ENCODE measurements at regions of chr5 and their contacts with region 1.

Region 1: GRCh38 chr5:157994906-157995519 is 136.1 kb upstream of the CLINT1 start:
- DNase-seq: peak; percentile 65 to 81 (median 72)
- ATAC-seq: peak; percentile 99
- H3K4me3 ChIP-seq: no peak overlapping the region
- H3K27ac ChIP-seq: no peak overlapping the region
- H3K4me1 ChIP-seq: no peaks in the 10 kb centered on the region
- H3K27me3 ChIP-seq: no peaks in the 10 kb centered on the region
- CTCF ChIP-seq: peak; percentile 51 to 58

Region 2: DNA sequence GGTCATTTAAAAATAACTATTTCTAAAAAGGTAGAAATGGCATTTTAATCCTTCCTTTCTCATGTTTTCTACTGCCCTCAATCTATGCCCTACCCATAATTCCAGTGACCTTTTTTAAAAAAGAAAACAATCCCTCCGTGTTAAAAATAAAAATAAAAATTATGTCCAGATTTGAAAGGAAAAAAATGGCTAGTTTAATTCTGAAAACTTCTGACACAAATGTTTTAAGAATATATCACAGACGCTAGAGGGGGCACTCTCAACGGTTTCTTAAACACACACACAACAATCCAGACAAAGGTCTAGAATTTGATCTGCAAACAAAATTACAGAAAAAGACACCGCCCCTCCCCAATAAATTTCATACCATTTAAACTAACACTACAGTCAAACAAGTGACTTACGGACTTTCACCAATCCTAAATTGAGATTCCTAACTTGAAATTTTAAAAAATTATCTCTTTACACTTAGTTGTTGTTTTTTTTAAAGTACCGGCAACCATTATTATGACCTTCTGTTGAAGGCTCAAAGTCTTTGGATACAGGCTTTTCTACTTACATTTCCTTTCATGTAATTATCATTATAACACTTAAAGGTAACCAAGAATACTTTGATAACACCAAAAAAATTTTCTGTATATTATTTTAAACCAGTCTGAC is 174.3 kb before region 1 on chr5:
- intact Hi-C with region 1: loop called in 1 of 2 experiments (anchors 10 kb)
- DNase-seq: peak in 2 of 4 donors; percentile 43 to 64
- ATAC-seq: peak; percentile 72
- H3K4me3 ChIP-seq: no peak overlapping the region
- H3K27ac ChIP-seq: no peak overlapping the region
- H3K4me1 ChIP-seq: peaks cover 11 to 24% of the 10 kb centered on the region in 2 donors
- H3K27me3 ChIP-seq: no peaks in the 10 kb centered on the region
- CTCF ChIP-seq: peak in 1 of 2 donors; percentile 41

Measured in left lung (tissue), 14 donors.